Testis (tissue), 5 donors: ENCODE measurements at regions of chr12 and their contacts with region 1.

Region 1: GRCh38 chr12:57127710-57128533 is at the start of gene LRP1:
- DNase-seq: peak; percentile 89
- H3K4me3 ChIP-seq: peak within 1 kb of the TSS; percentile 65 to 92
- H3K27ac ChIP-seq: peak within 1 kb of the TSS; percentile 98 to 99
- H3K4me1 ChIP-seq: peaks cover 41% of the 10 kb centered on the region
- H3K27me3 ChIP-seq: no peaks in the 10 kb centered on the region
- CTCF ChIP-seq: no peak
- POLR2A ChIP-seq: peak; percentile 51
- total RNA-seq, gene LRP1: 135 to 200 TPM

Region 2: DNA sequence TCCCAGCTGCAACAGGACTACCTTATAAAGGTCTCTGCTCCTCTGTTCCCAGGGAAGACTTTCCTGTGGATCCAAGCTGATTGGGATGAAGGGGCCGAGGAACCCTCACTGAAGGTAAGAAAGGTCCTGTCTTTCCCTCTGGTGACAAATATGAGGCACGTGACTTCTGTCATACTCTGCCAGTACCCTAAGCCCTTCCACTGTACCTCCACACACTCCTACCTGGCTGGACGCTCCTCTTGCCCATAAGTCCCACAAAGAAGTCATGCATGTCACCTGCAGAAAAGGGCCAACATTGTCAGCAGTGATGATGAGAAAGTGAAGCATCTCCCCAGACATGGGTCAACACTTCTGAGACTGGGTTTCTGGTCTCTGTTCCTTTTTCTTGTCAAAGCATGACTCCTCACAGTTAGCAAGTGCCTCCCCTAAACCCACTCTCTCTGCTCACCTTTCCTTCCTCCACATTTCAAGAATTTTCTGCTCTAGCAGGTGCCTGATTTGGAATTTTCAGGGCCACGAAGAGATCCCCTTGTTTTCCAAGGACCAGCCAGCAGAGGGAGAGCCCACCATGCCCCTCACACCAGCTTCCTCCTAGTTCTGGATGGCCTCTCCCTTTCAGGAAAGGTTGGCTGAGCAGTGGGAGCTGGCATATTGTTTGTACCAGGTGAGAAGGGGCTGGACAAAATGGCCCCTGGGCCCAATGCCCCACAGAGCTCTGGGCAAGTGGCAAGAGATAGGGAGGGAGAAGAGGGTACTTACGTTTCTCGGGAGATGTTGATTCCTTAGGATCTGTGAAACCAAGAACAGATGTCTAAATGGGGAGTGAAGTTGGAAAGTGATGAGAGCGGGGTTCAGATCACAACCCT is 115.1 kb before region 1 on chr12:
- intact Hi-C with region 1: no loop called
- DNase-seq: no peak
- H3K4me3 ChIP-seq: no peak overlapping the region
- H3K27ac ChIP-seq: no peak overlapping the region
- H3K4me1 ChIP-seq: no peaks in the 10 kb centered on the region
- H3K27me3 ChIP-seq: no peaks in the 10 kb centered on the region
- CTCF ChIP-seq: no peak
- POLR2A ChIP-seq: no peak

Region 3: GRCh38 chr12:57157588-57158173 is 29.8 kb after region 1 on chr12:
- intact Hi-C with region 1: no loop called
- DNase-seq: no peak
- H3K4me3 ChIP-seq: no peak overlapping the region
- H3K27ac ChIP-seq: peak overlapping the region in 1 of 2 donors; percentile 24
- H3K4me1 ChIP-seq: peaks cover 20% of the 10 kb centered on the region
- H3K27me3 ChIP-seq: no peaks in the 10 kb centered on the region
- CTCF ChIP-seq: no peak
- POLR2A ChIP-seq: no peak

Region 4: DNA sequence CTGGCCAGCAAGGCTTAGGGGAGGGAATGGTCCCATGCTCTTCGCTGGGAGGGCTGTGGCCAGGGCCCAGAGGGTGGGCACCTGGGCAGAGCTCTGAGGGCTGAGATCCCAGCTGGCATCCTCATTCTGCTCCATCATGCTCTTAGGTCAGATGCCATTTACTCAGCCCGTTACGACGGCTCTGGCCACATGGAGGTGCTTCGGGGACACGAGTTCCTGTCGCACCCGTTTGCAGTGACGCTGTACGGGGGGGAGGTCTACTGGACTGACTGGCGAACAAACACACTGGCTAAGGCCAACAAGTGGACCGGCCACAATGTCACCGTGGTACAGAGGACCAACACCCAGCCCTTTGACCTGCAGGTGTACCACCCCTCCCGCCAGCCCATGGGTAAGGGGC is 50.3 kb after region 1 on chr12:
- intact Hi-C with region 1: loop called (anchors 2 kb)
- DNase-seq: no peak
- H3K4me3 ChIP-seq: no peak overlapping the region
- H3K27ac ChIP-seq: no peak overlapping the region
- H3K4me1 ChIP-seq: peaks cover 15% of the 10 kb centered on the region
- H3K27me3 ChIP-seq: no peaks in the 10 kb centered on the region
- CTCF ChIP-seq: no peak
- POLR2A ChIP-seq: no peak